H1 (cell line): ENCODE measurements at regions of chr11 and their contacts with region 1.

Region 1: DNA sequence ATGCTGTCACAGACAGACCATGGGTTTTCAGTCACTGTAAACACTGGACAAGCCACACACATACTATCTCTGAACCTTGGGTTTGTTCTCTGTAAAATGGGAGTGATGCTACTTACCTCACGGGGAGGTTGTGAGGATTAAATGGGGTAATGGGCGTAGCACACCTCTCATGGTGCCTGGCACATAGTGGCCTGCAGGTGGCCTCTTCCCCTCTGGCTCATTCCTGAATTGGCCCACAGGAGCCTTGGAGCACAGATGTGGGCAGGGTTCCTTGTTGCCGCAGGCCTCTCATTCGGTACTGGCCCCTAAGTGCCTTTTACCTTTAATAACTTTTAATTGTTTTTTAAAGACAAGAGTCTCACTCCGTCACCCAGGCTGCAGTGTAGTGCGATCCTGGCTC is 11.7 kb downstream of the MICAL2 start:
- DNase-seq: peak in 1 of 2 experiments; percentile 58
- H3K4me3 ChIP-seq: no peak overlapping the region
- H3K27ac ChIP-seq: no peak overlapping the region
- H3K4me1 ChIP-seq: no peaks in the 10 kb centered on the region
- H3K27me3 ChIP-seq: 0 out of 7 replicates have a peak, but pooled peaks cover 0 to 3% (median 0%) of the 10 kb centered on the region in 4 experiments
- CTCF ChIP-seq: peak; percentile 81 to 93 (median 87)
- EP300 ChIP-seq: no peak
- POLR2A ChIP-seq: no peak
- RAD21 ChIP-seq: peak; percentile 72 to 80

Region 2: DNA sequence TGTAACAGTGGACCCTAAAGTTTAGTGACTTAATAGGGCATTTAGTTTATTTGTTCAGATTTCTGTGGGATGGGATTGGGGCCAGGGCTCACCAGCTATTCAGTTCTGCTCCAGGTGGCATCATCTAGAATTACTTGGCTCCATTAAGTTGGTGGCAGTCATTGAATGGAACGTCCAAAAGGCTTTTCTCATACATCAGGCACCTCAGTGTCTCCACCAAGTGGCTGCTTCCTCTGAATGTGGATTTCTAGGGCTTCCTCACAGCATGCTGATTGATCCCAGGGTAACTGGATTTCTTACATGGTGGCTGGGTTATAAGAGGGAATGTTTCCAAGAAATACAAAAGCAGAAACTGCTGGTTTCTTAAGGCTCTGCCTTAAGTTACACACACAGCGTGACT is 245.6 kb before region 1 on chr11:
- CTCF ChIA-PET with region 1: no interaction called
- POLR2A ChIA-PET with region 1: no interaction called
- DNase-seq: no peak
- H3K4me3 ChIP-seq: no peak overlapping the region
- H3K27ac ChIP-seq: no peak overlapping the region
- H3K4me1 ChIP-seq: peaks cover 2 to 7% (median 5%) of the 10 kb centered on the region in 4 experiments; a peak in 6 of 7 replicates
- H3K27me3 ChIP-seq: no peaks in the 10 kb centered on the region
- CTCF ChIP-seq: peak; percentile 7 to 66 (median 50)
- EP300 ChIP-seq: no peak
- POLR2A ChIP-seq: no peak
- RAD21 ChIP-seq: peak; percentile 51 to 55; a peak in 3 of 4 replicates

Region 3: DNA sequence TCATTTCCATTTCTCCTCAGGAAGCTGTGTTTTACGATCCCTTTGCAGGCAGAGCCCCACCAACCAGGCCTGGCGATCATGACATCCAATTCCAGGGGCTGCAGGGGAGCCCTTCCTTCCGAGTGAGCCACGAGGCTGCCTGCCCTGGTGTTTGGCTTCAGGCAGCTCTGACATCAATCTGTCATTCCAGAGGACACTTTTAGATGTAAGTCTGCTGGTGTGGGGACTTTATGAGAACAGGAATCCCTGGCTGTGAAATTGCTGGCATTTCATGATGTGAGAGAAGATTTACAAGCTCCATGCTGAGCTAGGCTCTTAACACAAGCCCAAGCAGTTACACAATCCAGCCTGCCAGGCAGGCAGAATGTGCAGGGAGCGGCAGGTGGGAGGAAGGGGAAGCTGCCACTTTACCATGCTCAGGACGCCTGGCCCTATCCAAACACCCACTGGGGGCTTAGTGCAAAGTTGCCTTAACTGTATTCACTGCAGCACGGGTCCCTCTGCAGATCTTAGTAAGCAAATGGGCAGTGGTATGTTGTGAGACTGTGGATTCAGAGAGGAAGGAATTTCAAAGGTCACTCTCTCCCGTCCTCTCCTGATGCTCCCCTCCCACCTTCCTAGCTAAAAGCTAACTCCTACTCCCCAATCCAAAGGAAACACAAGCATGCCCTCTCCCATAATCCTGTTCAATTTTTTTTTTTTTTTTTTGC is 55.1 kb before region 1 on chr11:
- CTCF ChIA-PET with region 1: interaction called, 11 read pairs
- POLR2A ChIA-PET with region 1: no interaction called
- DNase-seq: no peak
- H3K4me3 ChIP-seq: no peak overlapping the region; a peak in 1 of 8 replicates
- H3K27ac ChIP-seq: no peak overlapping the region
- H3K4me1 ChIP-seq: peaks cover 2 to 9% (median 5%) of the 10 kb centered on the region in 4 experiments; a peak in 4 of 7 replicates
- H3K27me3 ChIP-seq: peaks cover 0 to 2% (median under 1%) of the 10 kb centered on the region in 4 experiments; a peak in 1 of 7 replicates
- CTCF ChIP-seq: no peak
- EP300 ChIP-seq: no peak
- POLR2A ChIP-seq: no peak
- RAD21 ChIP-seq: no peak

Region 4: GRCh38 chr11:12110201-12110713 is 11.8 kb before region 1 on chr11 and contains the start of gene MICAL2:
- CTCF ChIA-PET with region 1: interaction called, 14 read pairs
- POLR2A ChIA-PET with region 1: interaction called, 4 read pairs
- DNase-seq: peak; percentile 61 to 87
- H3K4me3 ChIP-seq: peak within 1 kb of the TSS; percentile 36 to 71 (median 50)
- H3K27ac ChIP-seq: no peak within 1 kb of the TSS
- H3K4me1 ChIP-seq: peaks cover 0 to 10% (median 4%) of the 10 kb centered on the region in 4 experiments; a peak in 5 of 7 replicates
- H3K27me3 ChIP-seq: peaks cover 0 to 35% (median 30%) of the 10 kb centered on the region in 4 experiments; a peak in 5 of 7 replicates
- CTCF ChIP-seq: no peak
- EP300 ChIP-seq: no peak
- POLR2A ChIP-seq: no peak
- RAD21 ChIP-seq: no peak
- total RNA-seq, gene MICAL2: 4.1 and 4.2 TPM in 2 replicates

Region 5: DNA sequence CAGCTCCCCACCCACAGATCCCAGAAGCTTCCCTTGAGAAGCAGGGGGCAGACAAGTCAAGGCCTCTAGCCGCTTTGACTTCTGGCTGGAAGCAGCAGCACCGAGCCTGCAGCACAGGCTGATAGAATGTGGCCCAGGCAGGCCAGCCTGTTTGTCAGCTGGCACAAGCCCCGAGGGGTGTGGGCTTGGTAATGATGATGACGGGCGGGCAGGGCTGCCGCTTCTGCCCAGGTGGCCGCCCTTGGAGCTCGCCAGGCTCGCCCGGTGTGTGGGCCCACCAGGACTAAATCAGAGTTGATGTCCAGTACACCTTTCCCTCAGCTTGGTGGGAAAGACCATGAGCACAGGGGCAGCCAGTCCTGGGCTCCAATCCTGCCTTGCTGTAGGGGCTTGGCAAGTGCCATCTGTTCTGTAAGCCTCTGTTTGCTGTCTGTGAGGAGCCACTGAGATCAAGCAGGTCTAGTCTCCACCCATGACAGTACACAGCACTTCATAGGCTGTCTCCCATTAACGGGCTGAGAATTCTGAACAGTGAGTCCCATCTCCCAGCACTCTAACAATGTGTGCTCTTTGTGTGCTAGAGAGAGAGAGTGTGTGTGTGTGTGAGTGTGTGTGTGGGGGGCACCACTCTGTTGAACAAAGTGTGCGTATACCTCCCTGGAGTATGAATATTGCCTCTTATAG is 15.1 kb after region 1 on chr11:
- CTCF ChIA-PET with region 1: interaction called, 11 read pairs
- POLR2A ChIA-PET with region 1: no interaction called
- DNase-seq: no peak
- H3K4me3 ChIP-seq: no peak overlapping the region
- H3K27ac ChIP-seq: no peak overlapping the region
- H3K4me1 ChIP-seq: peaks cover 0 to 3% (median 1%) of the 10 kb centered on the region in 4 experiments; a peak in 2 of 7 replicates
- H3K27me3 ChIP-seq: no peaks in the 10 kb centered on the region
- CTCF ChIP-seq: no peak
- EP300 ChIP-seq: no peak
- POLR2A ChIP-seq: no peak
- RAD21 ChIP-seq: no peak

Region 6: GRCh38 chr11:12189543-12190235 is 67.6 kb after region 1 on chr11:
- CTCF ChIA-PET with region 1: no interaction called
- POLR2A ChIA-PET with region 1: no interaction called
- DNase-seq: no peak
- H3K4me3 ChIP-seq: no peak overlapping the region
- H3K27ac ChIP-seq: no peak overlapping the region
- H3K4me1 ChIP-seq: no peaks in the 10 kb centered on the region
- H3K27me3 ChIP-seq: no peaks in the 10 kb centered on the region
- CTCF ChIP-seq: no peak
- EP300 ChIP-seq: no peak
- POLR2A ChIP-seq: no peak
- RAD21 ChIP-seq: 0 out of 4 replicates have a peak, but pooled peaks of 1 of the 2 experiments have one; percentile 3

Region 7: GRCh38 chr11:12377106-12377823 is 255.2 kb after region 1 on chr11 and contains the start of gene PARVA:
- CTCF ChIA-PET with region 1: no interaction called
- POLR2A ChIA-PET with region 1: no interaction called
- DNase-seq: peak; percentile 50 to 86
- H3K4me3 ChIP-seq: peak within 1 kb of the TSS; percentile 72 to 98 (median 83)
- H3K27ac ChIP-seq: peak within 1 kb of the TSS; percentile 83
- H3K4me1 ChIP-seq: peaks cover 0 to 6% (median 2%) of the 10 kb centered on the region in 4 experiments; a peak in 3 of 7 replicates
- H3K27me3 ChIP-seq: peaks cover 2 to 12% (median 8%) of the 10 kb centered on the region in 4 experiments
- CTCF ChIP-seq: no peak
- EP300 ChIP-seq: no peak
- POLR2A ChIP-seq: no peak; a peak in 1 of 3 replicates
- RAD21 ChIP-seq: no peak; a peak in 1 of 4 replicates
- total RNA-seq, gene PARVA: 13.5 and 14.3 TPM in 2 replicates